Caco-2 (cell line): ENCODE measurements at regions of chrX and their contacts with region 1.

Region 1: DNA sequence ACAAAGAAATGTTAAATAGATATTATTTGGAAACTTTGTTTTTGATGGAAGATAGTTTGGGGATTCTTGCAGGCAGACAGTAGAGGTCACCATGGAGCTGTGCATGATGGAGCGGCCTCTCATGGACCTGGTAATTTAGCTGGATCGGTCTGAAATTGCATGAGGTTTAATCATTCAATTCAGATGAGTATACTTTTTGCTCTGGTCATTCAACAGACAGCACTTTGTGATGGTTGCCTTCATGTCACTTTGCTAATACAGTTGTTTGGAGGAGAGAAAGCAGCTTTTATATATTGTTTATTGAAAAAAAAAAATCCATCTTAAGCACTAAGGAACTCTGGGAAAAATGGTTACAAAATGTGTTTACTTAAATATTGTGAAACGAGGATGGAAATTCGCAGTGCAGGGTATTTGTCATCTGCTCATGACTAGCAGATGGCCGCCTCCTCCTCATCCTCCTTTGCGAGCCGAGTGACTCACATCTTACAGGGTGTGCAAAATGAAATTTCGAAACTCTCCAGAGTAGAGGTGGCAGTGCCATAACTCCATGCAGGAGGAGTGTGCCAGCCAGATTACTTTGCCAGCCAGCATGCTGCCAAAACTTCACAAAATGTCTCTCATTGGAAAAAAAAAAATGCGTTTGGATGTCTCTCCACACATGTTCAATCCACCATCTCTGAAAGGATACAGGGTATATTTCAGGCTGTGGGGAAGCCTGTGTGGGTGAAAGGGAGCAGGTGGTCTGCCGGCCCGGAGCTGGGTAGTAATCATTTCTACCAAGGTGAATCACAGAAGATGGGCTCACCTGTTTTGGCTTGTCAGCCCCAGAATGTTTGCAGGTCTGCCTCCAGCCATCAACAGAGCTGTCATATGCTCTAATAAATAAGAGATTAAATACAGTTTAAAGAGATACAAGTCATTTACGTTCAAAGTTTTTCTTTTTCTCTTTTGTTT is 314.9 kb upstream of the DIPK2B start:
- DNase-seq: peak; percentile 42 to 46
- H3K4me3 ChIP-seq: no peak overlapping the region
- H3K4me3 Mint-ChIP-seq: peak overlapping the region; percentile 59
- H3K27ac Mint-ChIP-seq: no peak overlapping the region
- H3K4me1 ChIP-seq: no peaks in the 10 kb centered on the region
- H3K4me1 Mint-ChIP-seq: peaks cover 7% of the 10 kb centered on the region
- H3K27me3 ChIP-seq: no peaks in the 10 kb centered on the region
- H3K27me3 Mint-ChIP-seq: no peaks in the 10 kb centered on the region
- CTCF ChIP-seq: peak; percentile 38 to 62

Region 2: DNA sequence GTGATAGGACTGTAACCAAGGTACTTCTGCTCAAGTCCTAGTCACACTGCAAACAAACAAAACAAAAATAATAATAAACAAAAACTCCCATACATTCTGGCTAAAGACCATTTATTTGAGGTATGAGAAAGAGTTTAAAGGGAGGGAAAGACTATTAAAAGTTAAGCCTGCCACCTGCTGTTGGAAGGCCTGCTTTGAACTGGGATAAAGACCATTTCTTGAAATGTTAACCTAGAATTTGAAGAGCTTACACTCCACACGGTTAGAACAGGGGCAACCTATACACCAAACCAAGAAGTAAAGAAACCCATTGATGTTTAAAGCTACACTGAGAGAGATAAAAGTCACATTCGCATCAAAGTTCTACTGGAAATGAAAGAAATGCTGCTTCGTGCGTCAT is 233.8 kb after region 1 on chrX:
- CTCF ChIA-PET with region 1: no interaction called
- POLR2A ChIA-PET with region 1: no interaction called
- intact Hi-C with region 1: loop called (anchors 5 kb)
- DNase-seq: no peak
- H3K4me3 ChIP-seq: no peak overlapping the region
- H3K4me3 Mint-ChIP-seq: no peak overlapping the region
- H3K27ac Mint-ChIP-seq: no peak overlapping the region
- H3K4me1 ChIP-seq: no peaks in the 10 kb centered on the region
- H3K4me1 Mint-ChIP-seq: no peaks in the 10 kb centered on the region
- H3K27me3 ChIP-seq: no peaks in the 10 kb centered on the region
- H3K27me3 Mint-ChIP-seq: no peaks in the 10 kb centered on the region
- CTCF ChIP-seq: peak in 1 of 2 experiments; percentile 13

Region 3: GRCh38 chrX:45781901-45782553 is 266.5 kb after region 1 on chrX:
- CTCF ChIA-PET with region 1: no interaction called
- POLR2A ChIA-PET with region 1: no interaction called
- intact Hi-C with region 1: loop called (anchors 10 kb)
- DNase-seq: no peak
- H3K4me3 ChIP-seq: no peak overlapping the region
- H3K4me3 Mint-ChIP-seq: no peak overlapping the region
- H3K27ac Mint-ChIP-seq: no peak overlapping the region
- H3K4me1 ChIP-seq: no peaks in the 10 kb centered on the region
- H3K4me1 Mint-ChIP-seq: no peaks in the 10 kb centered on the region
- H3K27me3 ChIP-seq: no peaks in the 10 kb centered on the region
- H3K27me3 Mint-ChIP-seq: no peaks in the 10 kb centered on the region
- CTCF ChIP-seq: peak in 1 of 2 experiments; percentile 21

Region 4: DNA sequence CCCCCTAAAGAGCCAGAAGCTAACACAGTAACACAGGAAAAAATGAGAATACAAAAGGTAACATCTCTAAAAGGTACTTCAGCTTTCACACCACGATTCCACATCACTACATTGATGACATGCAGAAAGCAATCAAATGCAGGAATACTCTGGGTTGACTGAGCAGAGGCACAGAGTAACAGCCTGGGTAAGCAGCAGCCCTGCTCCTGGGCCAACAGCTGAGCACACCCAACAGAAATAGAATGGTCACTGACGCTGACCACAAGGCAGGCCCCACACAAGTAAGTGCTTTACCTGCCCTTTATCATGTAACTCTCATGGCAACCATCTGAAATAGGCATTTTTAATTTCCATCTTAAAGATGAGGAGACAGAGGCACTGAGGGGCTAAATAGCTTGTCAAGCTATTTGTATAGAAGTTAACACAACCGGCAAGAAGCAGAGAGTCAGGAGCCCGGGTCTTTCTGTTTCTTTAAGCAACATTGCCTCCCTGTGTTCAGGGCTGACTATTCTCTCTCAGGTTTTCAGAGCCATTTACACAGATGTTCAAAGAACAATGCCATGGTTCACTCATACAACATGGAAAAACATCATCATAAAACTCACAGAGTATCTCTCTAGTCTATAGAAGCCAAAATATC is 860.8 kb after region 1 on chrX:
- CTCF ChIA-PET with region 1: no interaction called
- POLR2A ChIA-PET with region 1: no interaction called
- intact Hi-C with region 1: loop called (anchors 1 kb)
- DNase-seq: peak; percentile 44 to 50
- H3K4me3 ChIP-seq: no peak overlapping the region
- H3K4me3 Mint-ChIP-seq: no peak overlapping the region
- H3K27ac Mint-ChIP-seq: no peak overlapping the region
- H3K4me1 ChIP-seq: peaks cover 16% of the 10 kb centered on the region
- H3K4me1 Mint-ChIP-seq: peaks cover 19% of the 10 kb centered on the region
- H3K27me3 ChIP-seq: no peaks in the 10 kb centered on the region
- H3K27me3 Mint-ChIP-seq: no peaks in the 10 kb centered on the region
- CTCF ChIP-seq: peak in 1 of 2 experiments; percentile 38

Region 5: DNA sequence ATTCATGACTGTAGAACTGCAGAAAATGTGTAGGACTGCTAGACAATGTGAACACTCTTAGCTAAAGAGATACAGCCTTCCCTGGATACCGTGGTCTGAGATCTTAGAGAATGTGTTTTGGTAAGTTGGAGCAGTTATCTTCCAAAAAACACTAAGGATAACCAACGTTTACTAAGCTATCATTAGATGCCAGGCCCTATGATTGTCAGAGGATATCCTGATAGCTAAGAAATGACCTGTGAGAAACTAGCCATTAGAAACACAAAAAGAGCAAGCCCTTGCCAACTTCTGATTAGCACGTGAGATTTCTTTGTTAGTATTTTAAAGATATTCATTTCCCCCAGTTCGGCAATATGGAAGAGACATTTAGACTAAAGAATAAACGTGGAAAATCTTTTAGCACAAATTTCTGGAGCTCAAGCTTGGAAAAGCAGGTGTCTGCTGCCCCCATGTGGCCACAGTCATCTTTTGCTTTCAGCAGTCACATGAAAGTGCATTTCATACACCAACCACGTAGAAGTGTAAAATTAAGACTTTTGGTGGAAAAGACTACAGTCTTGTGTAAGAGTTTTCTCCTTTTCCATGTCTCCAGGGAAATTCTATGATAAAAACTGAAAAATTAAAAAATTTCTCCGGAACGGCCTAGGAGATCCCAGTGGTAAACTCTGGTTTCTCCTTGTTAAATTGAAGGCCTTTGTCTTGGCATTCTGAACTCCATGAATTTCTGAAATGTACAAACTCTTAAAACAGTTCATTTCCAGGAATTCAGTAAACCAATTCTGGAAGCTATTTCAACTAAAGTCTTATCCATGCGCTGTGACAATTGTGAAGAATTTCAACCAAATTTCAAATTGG is 893.2 kb after region 1 on chrX:
- CTCF ChIA-PET with region 1: interaction called, 6 read pairs
- POLR2A ChIA-PET with region 1: no interaction called
- intact Hi-C with region 1: loop called (anchors 1 kb)
- DNase-seq: peak; percentile 46 to 64
- H3K4me3 ChIP-seq: no peak overlapping the region
- H3K4me3 Mint-ChIP-seq: no peak overlapping the region
- H3K27ac Mint-ChIP-seq: no peak overlapping the region
- H3K4me1 ChIP-seq: peaks cover 4% of the 10 kb centered on the region; the same call in 1 of the 2 replicates
- H3K4me1 Mint-ChIP-seq: no peaks in the 10 kb centered on the region
- H3K27me3 ChIP-seq: no peaks in the 10 kb centered on the region
- H3K27me3 Mint-ChIP-seq: no peaks in the 10 kb centered on the region
- CTCF ChIP-seq: peak; percentile 58 to 74